ENCODE measurements at regions of chrX and their contacts with region 1.

Region 1: GRCh38 chrX:43357741-43358140 is 298.4 kb upstream of the MAOA start:
- DNase-seq: no peak
- H3K4me3 ChIP-seq: no peak overlapping the region
- H3K27ac ChIP-seq: no peak overlapping the region
- H3K4me1 ChIP-seq: no peaks in the 10 kb centered on the region
- H3K27me3 ChIP-seq: no peaks in the 10 kb centered on the region
- CTCF ChIP-seq: no peak

Region 2: GRCh38 chrX:43703211-43703791 is 345.6 kb after region 1 on chrX:
- CTCF ChIA-PET with region 1: no interaction called
- dilution Hi-C with region 1: no loop called
- in situ Hi-C with region 1: no loop called
- intact Hi-C with region 1: no loop called
- DNase-seq: no peak
- H3K4me3 ChIP-seq: no peak overlapping the region
- H3K27ac ChIP-seq: peak overlapping the region; percentile 44
- H3K4me1 ChIP-seq: peaks cover 17% of the 10 kb centered on the region
- H3K27me3 ChIP-seq: peaks cover 6% of the 10 kb centered on the region
- CTCF ChIP-seq: no peak

Region 3: GRCh38 chrX:43750248-43750676 is 392.5 kb after region 1 on chrX:
- CTCF ChIA-PET with region 1: no interaction called
- dilution Hi-C with region 1: no loop called
- in situ Hi-C with region 1: loop called in 1 of 2 experiments (anchors 25 kb)
- intact Hi-C with region 1: no loop called
- DNase-seq: peak; percentile 51
- H3K4me3 ChIP-seq: no peak overlapping the region
- H3K27ac ChIP-seq: no peak overlapping the region
- H3K4me1 ChIP-seq: no peaks in the 10 kb centered on the region
- H3K27me3 ChIP-seq: no peaks in the 10 kb centered on the region
- CTCF ChIP-seq: peak; percentile 47 to 52

Measured in mammary epithelial cell (primary cell).